Activated CD8-positive, alpha-beta memory T cell treated with anti-CD3 and anti-CD28 coated beads, Interleukin-2, amount 10 ng/mL, durations not matched to agents 7 days and 5 days (primary cell): ENCODE measurements at regions of chr12 and their contacts with region 1.

Region 1: DNA sequence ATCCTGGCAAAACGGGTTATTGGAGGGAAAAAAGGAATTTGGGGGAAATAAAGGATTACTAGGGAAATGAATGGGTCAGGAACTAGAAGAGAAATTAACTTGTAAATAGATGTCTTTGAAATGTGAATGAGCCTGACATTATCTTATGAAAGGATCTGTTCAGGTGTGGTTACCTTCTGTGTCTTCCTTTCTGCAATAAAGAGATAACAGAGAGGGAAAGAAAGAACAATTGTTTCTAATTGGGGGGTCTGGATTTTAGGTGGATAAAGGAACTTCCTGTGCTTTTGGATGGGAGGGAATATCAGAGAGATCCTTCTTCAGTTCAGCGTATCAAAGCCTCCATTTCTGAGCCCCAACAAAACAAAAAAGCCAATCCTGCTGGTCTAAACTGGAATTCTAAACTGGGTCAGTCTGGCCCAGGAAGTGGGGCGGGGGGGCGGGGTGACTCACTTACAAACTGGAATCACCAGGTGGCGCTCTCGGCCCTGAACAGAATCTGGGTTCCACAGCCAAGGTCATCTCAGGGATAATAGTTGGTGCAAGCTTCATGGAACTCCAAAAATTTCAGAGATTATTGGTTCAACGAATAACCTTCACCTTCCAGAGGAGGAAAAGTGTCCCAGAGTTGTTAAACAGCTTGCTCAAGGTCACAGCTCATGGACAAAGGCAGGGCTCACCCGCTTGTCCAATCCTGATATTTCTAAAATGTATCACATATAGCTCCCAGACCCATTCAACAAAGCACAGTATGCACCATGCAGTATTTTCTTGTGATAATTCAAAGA is 15.2 kb upstream of the PEBP1 start:
- DNase-seq: peak; percentile 75
- ATAC-seq: peak; percentile 86
- H3K4me3 Mint-ChIP-seq: no peak overlapping the region
- H3K27ac Mint-ChIP-seq: peak overlapping the region; percentile 74
- H3K4me1 Mint-ChIP-seq: peaks cover 8% of the 10 kb centered on the region
- H3K27me3 Mint-ChIP-seq: no peaks in the 10 kb centered on the region

Region 2: GRCh38 chr12:118135788-118136558 is 15.2 kb after region 1 on chr12 and contains the start of gene PEBP1:
- CTCF ChIA-PET with region 1: interaction called, 19 read pairs
- DNase-seq: peak; percentile 95
- ATAC-seq: peak; percentile 100
- H3K4me3 Mint-ChIP-seq: peak within 1 kb of the TSS; percentile 87
- H3K27ac Mint-ChIP-seq: peak within 1 kb of the TSS; percentile 86
- H3K4me1 Mint-ChIP-seq: peaks cover 36% of the 10 kb centered on the region
- H3K27me3 Mint-ChIP-seq: no peaks in the 10 kb centered on the region
- total RNA-seq, gene PEBP1: 93.7 to 136 TPM